Activated naive CD4-positive, alpha-beta T cell treated with anti-CD3 and anti-CD28 coated beads, Interleukin-2, amount 10 ng/mL, durations not matched to agents 7 days and 5 days (primary cell): ENCODE measurements at regions of chr17 and their contacts with region 1.

Region 1: GRCh38 chr17:48081858-48082257 is 19.4 kb downstream of the CBX1 start:
- DNase-seq: no peak
- H3K4me3 Mint-ChIP-seq: no peak overlapping the region
- H3K27ac Mint-ChIP-seq: no peak overlapping the region
- H3K4me1 Mint-ChIP-seq: peaks cover 13% of the 10 kb centered on the region
- H3K27me3 Mint-ChIP-seq: no peaks in the 10 kb centered on the region

Region 2: DNA sequence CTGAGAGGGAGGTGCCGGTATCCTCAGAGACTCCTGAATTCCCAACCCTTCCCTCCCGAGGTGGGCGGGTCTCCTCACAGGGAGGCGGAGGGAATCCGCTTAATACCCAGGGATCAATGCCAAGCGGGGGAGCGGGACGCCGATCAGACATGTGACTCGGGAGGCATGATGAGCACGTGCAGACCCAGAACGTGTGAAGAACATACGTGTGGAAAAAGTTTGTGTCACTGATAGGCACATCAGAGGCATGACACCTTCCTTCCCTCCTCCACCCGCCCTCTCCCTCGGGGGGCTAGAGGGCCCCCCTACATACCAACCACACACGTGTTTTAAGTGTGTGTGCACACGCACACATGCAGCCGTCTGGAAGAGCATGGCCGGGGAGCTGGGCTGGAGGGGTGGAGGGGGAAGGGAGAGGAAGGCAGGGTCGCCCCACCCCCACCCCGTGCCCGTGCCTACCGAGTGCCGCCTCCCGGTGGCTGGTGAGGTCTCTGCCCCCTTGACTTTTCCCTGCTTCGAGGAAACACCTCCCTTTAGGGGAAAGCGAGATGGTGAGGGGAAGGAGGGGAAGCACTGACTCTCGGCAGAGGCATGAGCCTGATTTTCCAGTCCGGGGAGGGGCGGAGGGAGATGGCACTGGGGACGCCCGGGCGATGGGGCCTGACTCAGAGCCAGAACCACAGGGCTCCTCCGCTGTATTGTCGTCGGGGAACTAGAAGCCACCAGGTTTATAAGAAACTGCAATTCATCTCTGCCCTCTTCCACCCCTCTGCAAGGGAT is 360.9 kb before region 1 on chr17:
- CTCF ChIA-PET with region 1: no interaction called
- DNase-seq: peak; percentile 86
- H3K4me3 Mint-ChIP-seq: no peak overlapping the region
- H3K27ac Mint-ChIP-seq: peak overlapping the region; percentile 26
- H3K4me1 Mint-ChIP-seq: peaks cover 80% of the 10 kb centered on the region
- H3K27me3 Mint-ChIP-seq: peaks cover 17% of the 10 kb centered on the region

Region 3: DNA sequence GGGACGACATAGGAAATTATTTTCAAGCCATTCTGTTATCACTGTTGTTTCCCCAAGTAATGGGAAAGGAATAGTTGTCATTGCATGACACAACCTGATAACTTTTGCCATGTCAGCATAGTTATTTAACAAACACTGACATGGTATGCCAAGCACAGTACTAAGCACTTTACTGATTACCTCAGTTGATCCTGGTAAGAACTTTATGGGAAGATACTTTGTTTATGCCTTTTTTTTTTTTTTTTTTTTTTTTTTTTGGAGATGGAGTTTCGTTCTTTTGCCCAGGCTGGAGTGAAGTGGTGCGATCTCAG is 156.2 kb before region 1 on chr17:
- CTCF ChIA-PET with region 1: no interaction called
- DNase-seq: no peak
- H3K4me3 Mint-ChIP-seq: no peak overlapping the region
- H3K27ac Mint-ChIP-seq: no peak overlapping the region
- H3K4me1 Mint-ChIP-seq: no peaks in the 10 kb centered on the region
- H3K27me3 Mint-ChIP-seq: no peaks in the 10 kb centered on the region

Region 4: GRCh38 chr17:48037036-48037837 is 44.6 kb before region 1 on chr17 and contains the start of gene COPZ2:
- CTCF ChIA-PET with region 1: interaction called, 10 read pairs
- DNase-seq: peak; percentile 77
- H3K4me3 Mint-ChIP-seq: peak within 1 kb of the TSS; percentile 77
- H3K27ac Mint-ChIP-seq: no peak within 1 kb of the TSS
- H3K4me1 Mint-ChIP-seq: peaks cover 21% of the 10 kb centered on the region
- H3K27me3 Mint-ChIP-seq: peaks cover 85% of the 10 kb centered on the region

Region 5: DNA sequence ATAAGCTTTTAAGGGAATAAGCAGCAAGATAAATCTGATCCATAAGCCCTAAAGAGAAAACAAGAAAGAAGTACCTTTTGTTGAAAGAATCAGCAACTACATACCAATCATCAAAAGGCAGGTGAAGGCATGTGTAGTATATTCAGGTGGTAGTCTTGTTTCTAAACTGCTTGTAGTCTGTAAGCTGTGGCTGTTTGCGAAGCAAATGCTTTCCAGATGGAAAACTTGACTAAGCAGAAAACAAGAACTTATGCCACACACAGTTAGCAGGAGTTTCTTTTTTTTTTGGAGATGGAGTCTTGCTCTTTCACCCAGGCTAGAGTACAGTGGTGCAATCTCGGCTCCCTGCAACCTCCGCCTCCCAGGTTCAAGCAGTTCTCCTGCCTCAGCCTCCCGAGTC is 13.8 kb after region 1 on chr17:
- CTCF ChIA-PET with region 1: interaction called, 52 read pairs
- DNase-seq: no peak
- H3K4me3 Mint-ChIP-seq: no peak overlapping the region
- H3K27ac Mint-ChIP-seq: no peak overlapping the region
- H3K4me1 Mint-ChIP-seq: peaks cover 34% of the 10 kb centered on the region
- H3K27me3 Mint-ChIP-seq: no peaks in the 10 kb centered on the region

Region 6: DNA sequence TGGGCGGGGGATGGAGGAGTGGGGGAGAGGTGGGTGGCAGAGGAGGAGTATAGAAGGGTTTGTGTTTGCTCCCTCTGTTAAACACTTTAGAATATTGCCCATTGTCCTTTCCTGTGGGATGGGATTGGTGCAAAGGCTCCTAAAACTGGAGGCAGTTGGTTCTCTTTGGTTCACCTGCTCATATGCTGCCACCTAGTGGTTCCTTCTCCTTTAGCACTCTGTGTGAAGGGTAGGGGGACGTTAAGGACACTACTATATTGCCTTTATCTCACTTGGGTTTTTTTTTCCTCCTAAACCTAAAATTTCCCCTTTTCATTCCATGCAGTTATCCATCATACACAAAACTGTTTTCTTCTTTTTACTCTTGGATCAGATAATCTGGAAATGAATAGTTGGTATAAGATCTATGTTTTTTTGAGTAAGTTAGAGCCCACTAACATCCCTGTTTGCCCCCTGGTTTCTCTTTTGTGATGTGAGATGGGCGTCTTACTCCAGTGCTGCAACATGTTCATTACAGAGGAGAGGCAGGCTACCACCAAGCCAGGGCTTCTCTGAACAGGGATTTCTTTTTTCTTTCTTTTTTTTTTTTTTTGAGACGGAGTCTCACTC is 49.5 kb after region 1 on chr17:
- CTCF ChIA-PET with region 1: interaction called, 64 read pairs
- DNase-seq: peak; percentile 67
- H3K4me3 Mint-ChIP-seq: no peak overlapping the region
- H3K27ac Mint-ChIP-seq: no peak overlapping the region
- H3K4me1 Mint-ChIP-seq: no peaks in the 10 kb centered on the region
- H3K27me3 Mint-ChIP-seq: no peaks in the 10 kb centered on the region